Activated B cell treated with CpG ODN at 0.5 μM for 24 hours (primary cell): ENCODE measurements at regions of chr2 and their contacts with region 1.

Region 1: DNA sequence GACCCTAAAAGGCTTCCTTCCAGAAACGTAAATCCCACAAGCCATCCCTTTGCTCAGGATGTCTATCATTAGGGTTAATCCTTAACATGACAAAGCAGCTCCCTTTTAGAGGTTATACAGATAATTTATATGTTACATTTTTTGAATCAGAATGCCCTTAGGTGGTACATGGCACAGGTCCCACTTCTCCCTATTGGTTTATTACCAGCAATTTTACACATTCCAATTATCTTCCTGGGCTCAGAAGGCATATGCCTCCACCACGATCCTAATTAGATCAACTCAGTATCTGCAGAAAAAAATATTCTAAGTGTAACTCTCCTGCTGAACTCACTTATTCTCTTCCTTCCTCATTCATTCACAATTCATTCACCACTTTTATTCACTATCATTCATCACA is 507.0 kb upstream of the MAP2 start:
- DNase-seq: no peak
- ATAC-seq: no peak
- H3K4me3 Mint-ChIP-seq: no peak overlapping the region
- H3K27ac Mint-ChIP-seq: no peak overlapping the region
- H3K4me1 Mint-ChIP-seq: no peaks in the 10 kb centered on the region
- H3K27me3 Mint-ChIP-seq: no peaks in the 10 kb centered on the region
- CTCF ChIP-seq: no peak

Region 2: DNA sequence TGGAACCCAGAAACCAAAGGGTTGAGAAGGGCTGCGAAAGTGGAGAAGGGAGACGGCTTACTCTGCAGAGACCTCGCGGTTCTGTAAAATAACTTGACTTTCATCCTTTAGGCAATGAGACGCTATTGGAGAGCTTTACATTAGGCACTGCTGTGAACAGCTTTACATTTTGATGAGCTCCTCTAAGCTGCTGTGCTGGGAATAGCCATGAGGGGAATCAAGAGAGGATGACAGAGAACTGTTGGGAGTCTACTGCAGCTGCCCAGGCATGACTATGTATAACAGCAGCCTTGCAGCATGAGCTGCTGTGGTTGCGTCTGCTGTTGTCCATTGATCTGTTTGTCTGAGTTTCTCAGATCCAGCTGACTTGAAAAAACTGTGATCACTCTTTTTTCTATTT is 196.1 kb after region 1 on chr2:
- CTCF ChIA-PET with region 1: interaction called, 3 read pairs
- POLR2A ChIA-PET with region 1: no interaction called
- intact Hi-C with region 1: loop called (anchors 5 kb)
- DNase-seq: no peak
- ATAC-seq: no peak
- H3K4me3 Mint-ChIP-seq: no peak overlapping the region
- H3K27ac Mint-ChIP-seq: no peak overlapping the region
- H3K4me1 Mint-ChIP-seq: no peaks in the 10 kb centered on the region
- H3K27me3 Mint-ChIP-seq: no peaks in the 10 kb centered on the region
- CTCF ChIP-seq: no peak